GM12878 (cell line): ENCODE measurements at regions of chr2 and their contacts with region 1.

Region 1: DNA sequence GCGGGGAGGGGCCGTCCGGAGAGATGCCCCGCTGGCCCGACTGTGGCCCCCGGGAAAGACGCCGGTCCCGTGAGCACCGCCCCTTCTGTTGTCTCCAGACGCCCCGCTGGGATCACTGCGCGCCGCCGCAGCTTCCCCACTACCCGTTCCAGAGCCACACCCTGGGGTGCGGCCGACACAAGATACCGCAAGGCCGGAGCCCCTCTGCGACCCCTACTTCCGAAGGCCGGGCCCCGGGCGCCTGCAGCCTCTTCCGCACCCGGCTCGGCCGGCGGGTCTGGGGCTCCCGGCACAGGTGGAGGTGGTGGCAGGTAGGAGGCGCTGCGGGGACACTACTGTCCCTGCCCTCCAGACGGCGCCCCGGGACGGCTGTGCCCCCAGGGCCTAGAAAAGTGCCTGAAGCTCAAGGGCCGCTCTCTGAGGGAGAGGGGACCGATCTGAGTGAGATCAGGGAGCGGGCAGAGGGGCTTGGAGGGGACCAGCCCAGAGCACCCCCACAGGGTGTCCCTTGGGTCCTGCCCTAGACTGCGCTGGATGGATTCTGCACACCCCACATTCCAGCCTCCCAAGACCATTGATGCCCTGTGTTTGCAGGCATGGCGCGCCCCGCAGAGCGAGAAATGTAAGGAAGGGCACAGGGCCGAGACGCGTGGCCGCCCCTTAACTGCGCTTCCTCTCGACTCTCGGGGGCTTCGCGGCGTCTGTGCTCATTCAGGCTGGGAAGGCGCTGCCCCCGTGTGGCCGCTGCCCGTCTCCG is 80.0 kb downstream of the GFPT1 start:
- DNase-seq: no peak
- ATAC-seq: peak; percentile 97
- H3K4me3 ChIP-seq: peak overlapping the region; percentile 45; the same call in 1 of the 2 replicates
- H3K27ac ChIP-seq: no peak overlapping the region
- H3K4me1 ChIP-seq: 0 out of 2 replicates have a peak, but pooled peaks cover 5% of the 10 kb centered on the region
- H3K27me3 ChIP-seq: peaks cover 4 to 18% of the 10 kb centered on the region in 2 experiments
- CTCF ChIP-seq: peak; percentile 66 to 91 (median 79)
- EP300 ChIP-seq: no peak
- POLR2A ChIP-seq: peak; percentile 51
- RAD21 ChIP-seq: peak; percentile 85

Region 2: DNA sequence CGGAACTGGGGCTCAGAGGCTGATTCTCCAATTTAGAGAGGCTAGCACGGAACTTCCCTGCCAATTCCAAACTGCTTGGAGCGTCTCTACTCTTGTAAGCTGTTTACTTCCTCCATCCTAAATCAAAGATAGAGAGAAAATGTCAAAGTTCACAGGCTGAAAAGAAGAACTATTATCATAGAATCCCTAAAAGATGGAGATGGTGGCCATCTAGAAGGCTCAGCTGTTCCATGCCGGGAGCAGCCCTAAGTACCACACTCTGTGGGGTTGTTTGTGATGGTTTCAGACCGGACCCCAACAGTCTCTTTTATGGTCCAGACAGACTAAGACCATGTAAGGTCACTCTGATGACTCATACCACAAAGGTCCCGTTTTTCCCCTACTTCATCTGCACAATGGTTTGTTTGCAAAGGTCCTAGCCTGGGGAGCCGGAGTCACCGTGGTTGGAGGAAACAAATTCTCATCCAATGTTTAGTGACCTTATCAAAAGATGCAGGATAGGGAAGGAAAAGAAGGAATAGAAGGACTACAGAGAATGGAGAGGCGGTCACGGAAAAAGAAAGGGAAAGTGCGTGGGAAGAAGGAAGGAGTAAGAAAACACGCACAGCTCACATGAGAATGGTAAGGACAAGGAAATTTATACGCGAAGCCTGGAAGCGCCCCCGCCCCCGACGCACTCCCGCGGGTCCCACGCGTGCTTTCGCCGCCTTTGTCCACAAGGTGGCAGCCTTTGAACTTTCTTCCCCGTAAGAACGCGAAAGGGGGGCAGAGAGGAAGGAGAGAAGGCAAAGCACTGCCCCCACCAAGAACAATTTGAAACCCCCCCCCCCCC is 294.5 kb before region 1 on chr2:
- CTCF ChIA-PET with region 1: interaction called, 4 read pairs
- POLR2A ChIA-PET with region 1: no interaction called
- RAD21 ChIA-PET with region 1: no interaction called
- SMC1A ChIA-PET with region 1: no interaction called
- in situ Hi-C with region 1: no loop called
- intact Hi-C with region 1: loop called (anchors 5 kb)
- DNase-seq: no peak
- ATAC-seq: peak; percentile 85
- H3K4me3 ChIP-seq: no peak overlapping the region
- H3K27ac ChIP-seq: no peak overlapping the region
- H3K4me1 ChIP-seq: no peaks in the 10 kb centered on the region; the same call in 1 of the 2 replicates
- H3K27me3 ChIP-seq: peaks cover 6 to 14% of the 10 kb centered on the region in 2 experiments
- CTCF ChIP-seq: peak; percentile 42 to 57 (median 52)
- EP300 ChIP-seq: no peak
- POLR2A ChIP-seq: no peak
- RAD21 ChIP-seq: peak; percentile 43; the same call in 1 of the 2 replicates

Region 3: DNA sequence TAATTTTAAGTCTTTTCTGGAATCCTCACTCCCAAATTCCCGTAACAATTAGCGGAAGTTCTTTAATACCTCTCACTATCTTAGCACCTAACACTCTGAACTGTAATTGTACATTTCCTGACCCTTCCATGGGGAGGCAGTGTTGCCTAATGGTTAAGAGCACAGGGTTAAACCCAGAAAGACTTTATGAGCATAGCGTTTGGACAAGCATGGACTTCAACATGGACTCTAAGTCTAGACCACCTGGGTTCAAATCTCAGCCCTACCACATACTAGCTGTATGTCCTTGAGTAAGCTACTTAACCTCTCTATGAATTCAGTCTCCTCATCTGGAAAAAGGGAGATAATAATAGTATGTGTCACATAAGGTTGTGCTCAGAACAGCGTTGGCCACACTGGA is 281.0 kb before region 1 on chr2:
- CTCF ChIA-PET with region 1: interaction called, 3 read pairs
- POLR2A ChIA-PET with region 1: no interaction called
- RAD21 ChIA-PET with region 1: interaction called, 4 read pairs
- SMC1A ChIA-PET with region 1: interaction called, 4 read pairs
- in situ Hi-C with region 1: loop called (anchors 5 kb)
- intact Hi-C with region 1: loop called (anchors 1 kb)
- DNase-seq: peak; percentile 3
- ATAC-seq: peak; percentile 79
- H3K4me3 ChIP-seq: no peak overlapping the region
- H3K27ac ChIP-seq: no peak overlapping the region
- H3K4me1 ChIP-seq: no peaks in the 10 kb centered on the region
- H3K27me3 ChIP-seq: peaks cover 0 to 3% of the 10 kb centered on the region in 2 experiments; a peak in 1 of 4 replicates
- CTCF ChIP-seq: peak; percentile 49 to 67 (median 54); a peak in 5 of 6 replicates
- EP300 ChIP-seq: no peak
- POLR2A ChIP-seq: no peak
- RAD21 ChIP-seq: peak; percentile 92